ENCODE measurements at regions of chr2 and their contacts with region 1.

Region 1: GRCh38 chr2:9753276-9753600 is 90.0 kb upstream of the TAF1B start:
- DNase-seq: peak in 3 of 5 donors; percentile 10 to 61 (median 19)
- H3K4me3 ChIP-seq: peak overlapping the region; percentile 32
- H3K4me3 Mint-ChIP-seq: peak overlapping the region; percentile 22 to 96 (median 88)
- H3K27ac ChIP-seq: peak overlapping the region; percentile 67
- H3K27ac Mint-ChIP-seq: peak overlapping the region; percentile 73 to 100 (median 98)
- H3K4me1 ChIP-seq: peaks cover 29% of the 10 kb centered on the region
- H3K4me1 Mint-ChIP-seq: peaks cover 51 to 56% (median 54%) of the 10 kb centered on the region in 3 donors
- H3K27me3 ChIP-seq: peaks cover 3% of the 10 kb centered on the region
- H3K27me3 Mint-ChIP-seq: peaks cover 2 to 15% of the 10 kb centered on the region in 2 donors

Region 2: GRCh38 chr2:9703085-9703641 is 50.1 kb before region 1 on chr2:
- CTCF ChIA-PET with region 1: no interaction called
- POLR2A ChIA-PET with region 1: interaction called, 10 read pairs
- DNase-seq: peak; percentile 66 to 97 (median 90)
- H3K4me3 ChIP-seq: no peak overlapping the region
- H3K4me3 Mint-ChIP-seq: peak overlapping the region; percentile 23 to 88 (median 74)
- H3K27ac ChIP-seq: peak overlapping the region; percentile 82
- H3K27ac Mint-ChIP-seq: peak overlapping the region; percentile 94 to 100 (median 98)
- H3K4me1 ChIP-seq: peaks cover 27% of the 10 kb centered on the region
- H3K4me1 Mint-ChIP-seq: peaks cover 46 to 72% (median 53%) of the 10 kb centered on the region in 3 donors
- H3K27me3 ChIP-seq: no peaks in the 10 kb centered on the region
- H3K27me3 Mint-ChIP-seq: peaks cover 0 to 3% of the 10 kb centered on the region in 2 donors

Region 3: DNA sequence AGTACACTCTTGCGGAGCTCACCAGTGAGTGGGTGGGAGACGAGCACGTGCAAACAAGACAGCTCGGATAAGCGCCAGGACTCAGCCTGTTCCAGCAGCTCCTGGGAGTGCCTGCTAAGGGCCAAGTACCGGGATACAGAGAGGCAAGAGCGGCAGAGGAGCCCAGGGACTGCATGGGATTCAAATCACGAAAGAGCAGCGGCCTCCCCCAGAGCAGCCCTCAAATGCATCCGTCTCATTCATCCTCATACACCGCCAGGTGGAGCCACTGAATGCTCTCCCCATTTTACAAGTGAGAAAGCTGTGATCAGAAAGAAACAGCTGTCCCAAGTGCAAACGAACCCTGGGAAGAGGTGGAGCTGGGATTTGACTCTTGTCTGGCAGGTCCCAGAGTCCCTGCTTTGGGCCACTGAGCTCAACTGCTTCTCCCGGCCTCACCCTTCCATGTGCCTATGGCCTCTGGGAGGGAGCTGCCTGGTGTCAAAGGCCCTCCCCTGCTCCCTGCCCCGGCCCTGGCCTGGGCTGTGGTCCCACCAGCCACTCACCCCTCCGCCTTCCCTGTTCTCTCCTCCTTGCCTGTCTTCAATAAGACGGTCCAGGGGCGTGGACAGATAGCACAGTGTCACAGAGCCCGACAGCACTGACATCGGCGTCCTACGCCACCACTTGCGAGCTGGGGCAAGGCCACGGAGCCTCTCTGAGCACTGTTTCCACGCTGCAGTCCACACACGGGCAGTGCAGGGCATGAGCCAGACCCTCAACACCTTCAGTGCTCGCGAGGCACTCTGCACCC is 17.3 kb after region 1 on chr2:
- CTCF ChIA-PET with region 1: interaction called, 14 read pairs
- POLR2A ChIA-PET with region 1: no interaction called
- DNase-seq: peak in 4 of 5 donors; percentile 18 to 57 (median 35)
- H3K4me3 ChIP-seq: no peak overlapping the region
- H3K4me3 Mint-ChIP-seq: peak overlapping the region in 2 of 7 donors; percentile 4 to 32
- H3K27ac ChIP-seq: no peak overlapping the region
- H3K27ac Mint-ChIP-seq: peak overlapping the region in 4 of 8 donors; percentile 35 to 64 (median 50)
- H3K4me1 ChIP-seq: peaks cover 15% of the 10 kb centered on the region
- H3K4me1 Mint-ChIP-seq: peaks cover 10 to 17% (median 12%) of the 10 kb centered on the region in 3 donors
- H3K27me3 ChIP-seq: no peaks in the 10 kb centered on the region
- H3K27me3 Mint-ChIP-seq: peaks cover 0 to 1% of the 10 kb centered on the region in 2 donors

Measured in CD8-positive, alpha-beta memory T cell (primary cell).